Posterior vena cava (tissue), 2 donors: ENCODE measurements at regions of chr9 and their contacts with region 1.

Region 1: GRCh38 chr9:94173632-94174031 is 85.5 kb upstream of the ZNF169 start:
- DNase-seq: no peak

Region 2: DNA sequence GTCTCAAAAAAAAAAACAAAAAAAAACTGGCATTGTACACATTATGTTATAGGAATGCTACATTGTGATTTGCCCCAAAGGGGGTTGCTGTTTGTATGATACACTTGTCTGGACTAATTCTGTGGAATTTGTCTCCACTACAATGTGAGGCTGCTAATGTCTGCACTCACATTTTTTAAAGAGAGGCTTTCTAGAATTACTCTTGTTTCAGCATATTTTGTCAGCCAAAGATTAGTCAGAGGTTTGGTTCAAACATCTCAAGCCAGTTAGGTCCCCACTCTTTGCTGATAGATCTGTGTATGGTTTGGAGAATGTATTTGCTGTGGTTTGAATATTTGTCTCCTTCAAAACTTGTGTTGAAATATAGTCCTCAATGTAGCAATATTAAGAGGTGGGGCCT is 26.1 kb after region 1 on chr9:
- intact Hi-C with region 1: loop called in 1 of 2 experiments (anchors 2 kb)
- DNase-seq: no peak